ENCODE measurements at regions of chr11 and their contacts with region 1.

Region 1: GRCh38 chr11:35822815-35823495 is 120.9 kb upstream of the LDLRAD3 start:
- DNase-seq: no peak
- H3K4me3 Mint-ChIP-seq: no peak overlapping the region
- H3K27ac Mint-ChIP-seq: no peak overlapping the region
- H3K4me1 Mint-ChIP-seq: peaks cover 15% of the 10 kb centered on the region
- H3K27me3 Mint-ChIP-seq: no peaks in the 10 kb centered on the region

Region 2: GRCh38 chr11:35800970-35801953 is 21.7 kb before region 1 on chr11:
- CTCF ChIA-PET with region 1: interaction called, 22 read pairs
- POLR2A ChIA-PET with region 1: no interaction called
- intact Hi-C with region 1: no loop called
- DNase-seq: no peak
- H3K4me3 Mint-ChIP-seq: no peak overlapping the region
- H3K27ac Mint-ChIP-seq: no peak overlapping the region
- H3K4me1 Mint-ChIP-seq: peaks cover 5% of the 10 kb centered on the region
- H3K27me3 Mint-ChIP-seq: no peaks in the 10 kb centered on the region

Region 3: DNA sequence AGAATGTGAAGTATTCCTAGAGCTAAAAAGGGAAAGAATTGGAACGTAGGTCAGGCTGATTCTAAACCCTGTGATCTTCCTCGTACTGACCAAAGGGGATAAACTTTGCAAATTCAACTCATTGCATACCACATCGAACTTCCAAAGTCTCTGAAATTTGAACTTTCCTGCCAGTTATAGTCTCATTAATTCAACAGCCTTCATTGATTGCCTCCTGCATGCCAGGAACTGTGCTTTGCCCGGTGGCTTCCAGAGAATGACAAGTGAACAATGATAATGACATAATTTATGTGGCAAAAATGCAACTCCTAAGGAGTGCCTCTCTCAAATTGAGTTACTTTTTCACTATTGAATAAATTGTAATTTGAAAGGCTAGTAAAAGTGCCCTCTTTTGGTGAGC is 13.2 kb after region 1 on chr11:
- CTCF ChIA-PET with region 1: interaction called, 49 read pairs
- POLR2A ChIA-PET with region 1: no interaction called
- intact Hi-C with region 1: no loop called
- DNase-seq: no peak
- H3K4me3 Mint-ChIP-seq: no peak overlapping the region
- H3K27ac Mint-ChIP-seq: no peak overlapping the region
- H3K4me1 Mint-ChIP-seq: no peaks in the 10 kb centered on the region
- H3K27me3 Mint-ChIP-seq: peaks cover 12% of the 10 kb centered on the region

Region 4: GRCh38 chr11:36258730-36259360 is 435.9 kb after region 1 on chr11:
- CTCF ChIA-PET with region 1: interaction called, 11 read pairs
- POLR2A ChIA-PET with region 1: no interaction called
- intact Hi-C with region 1: no loop called
- DNase-seq: peak; percentile 42
- H3K4me3 Mint-ChIP-seq: no peak overlapping the region
- H3K27ac Mint-ChIP-seq: no peak overlapping the region
- H3K4me1 Mint-ChIP-seq: no peaks in the 10 kb centered on the region
- H3K27me3 Mint-ChIP-seq: peaks cover 30% of the 10 kb centered on the region